Stomach (tissue), 19 donors: ENCODE measurements at regions of chr17 and their contacts with region 1.

Region 1: GRCh38 chr17:82414548-82415281 is 3.4 kb upstream of the HEXD start:
- DNase-seq: peak; percentile 72 to 92
- H3K4me3 ChIP-seq: no peak overlapping the region
- H3K27ac ChIP-seq: no peak overlapping the region
- H3K4me1 ChIP-seq: peaks cover 6 to 31% (median 25%) of the 10 kb centered on the region in 4 donors
- H3K27me3 ChIP-seq: no peaks in the 10 kb centered on the region
- CTCF ChIP-seq: peak in 4 of 7 experiments; percentile 3 to 55 (median 51)
- EP300 ChIP-seq: no peak
- POLR2A ChIP-seq: no peak

Region 2: DNA sequence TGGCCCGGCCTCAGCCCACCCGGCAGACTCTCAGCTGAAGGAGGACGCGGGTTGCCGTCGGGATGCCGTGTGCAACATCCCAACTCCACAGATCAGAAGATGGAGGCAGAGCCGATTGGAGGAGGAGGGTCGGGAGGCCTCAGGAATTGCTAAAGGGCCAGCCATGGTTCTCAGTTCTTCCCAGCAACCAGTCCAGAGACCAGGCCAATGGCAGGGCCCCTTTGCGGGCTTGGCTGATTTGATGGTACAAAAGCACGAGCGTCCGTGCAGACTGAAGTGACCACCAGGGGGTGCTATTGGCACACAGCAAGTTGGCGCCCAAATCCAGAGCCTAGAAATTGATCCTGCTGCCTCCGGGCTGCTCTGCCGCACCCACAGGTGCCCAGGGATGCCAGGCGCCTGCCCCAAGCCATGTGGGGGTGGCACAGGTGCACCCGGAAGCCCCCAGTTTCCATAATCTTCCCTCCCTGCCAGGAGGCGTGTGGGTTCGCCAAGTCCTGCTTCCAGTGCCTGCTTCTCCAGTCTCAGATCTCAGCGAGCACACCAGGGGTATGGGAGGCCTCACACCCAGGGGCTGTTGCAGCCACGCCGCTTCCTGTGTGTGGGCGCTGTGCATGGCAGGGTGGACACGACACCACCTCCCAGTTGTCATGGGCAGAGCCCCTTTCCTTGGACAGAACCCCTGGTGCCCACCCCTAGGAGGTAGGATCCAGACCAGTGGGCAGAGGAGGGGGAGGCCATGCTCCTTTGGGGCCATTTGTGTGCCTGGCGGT is 62.8 kb before region 1 on chr17:
- intact Hi-C with region 1: loop called (anchors 5 kb)
- DNase-seq: peak; percentile 91 to 95
- H3K4me3 ChIP-seq: no peak overlapping the region
- H3K27ac ChIP-seq: no peak overlapping the region
- H3K4me1 ChIP-seq: peaks cover 6 to 28% (median 22%) of the 10 kb centered on the region in 4 donors
- H3K27me3 ChIP-seq: peaks cover 0 to 41% (median 0%) of the 10 kb centered on the region in 3 donors
- CTCF ChIP-seq: peak in 5 of 7 experiments; percentile 84 to 99 (median 92)
- EP300 ChIP-seq: no peak
- POLR2A ChIP-seq: no peak

Region 3: GRCh38 chr17:82458865-82459424 is 44.2 kb after region 1 on chr17:
- intact Hi-C with region 1: no loop called
- DNase-seq: peak; percentile 36 to 80
- H3K4me3 ChIP-seq: peak overlapping the region; percentile 89 to 97 (median 92)
- H3K27ac ChIP-seq: peak overlapping the region; percentile 92 to 100 (median 100)
- H3K4me1 ChIP-seq: peaks cover 22 to 62% (median 50%) of the 10 kb centered on the region in 4 donors
- H3K27me3 ChIP-seq: no peaks in the 10 kb centered on the region
- CTCF ChIP-seq: no peak
- EP300 ChIP-seq: no peak
- POLR2A ChIP-seq: no peak